Endothelial cell of umbilical vein (primary cell): ENCODE measurements at regions of chr15 and their contacts with region 1.

Region 1: DNA sequence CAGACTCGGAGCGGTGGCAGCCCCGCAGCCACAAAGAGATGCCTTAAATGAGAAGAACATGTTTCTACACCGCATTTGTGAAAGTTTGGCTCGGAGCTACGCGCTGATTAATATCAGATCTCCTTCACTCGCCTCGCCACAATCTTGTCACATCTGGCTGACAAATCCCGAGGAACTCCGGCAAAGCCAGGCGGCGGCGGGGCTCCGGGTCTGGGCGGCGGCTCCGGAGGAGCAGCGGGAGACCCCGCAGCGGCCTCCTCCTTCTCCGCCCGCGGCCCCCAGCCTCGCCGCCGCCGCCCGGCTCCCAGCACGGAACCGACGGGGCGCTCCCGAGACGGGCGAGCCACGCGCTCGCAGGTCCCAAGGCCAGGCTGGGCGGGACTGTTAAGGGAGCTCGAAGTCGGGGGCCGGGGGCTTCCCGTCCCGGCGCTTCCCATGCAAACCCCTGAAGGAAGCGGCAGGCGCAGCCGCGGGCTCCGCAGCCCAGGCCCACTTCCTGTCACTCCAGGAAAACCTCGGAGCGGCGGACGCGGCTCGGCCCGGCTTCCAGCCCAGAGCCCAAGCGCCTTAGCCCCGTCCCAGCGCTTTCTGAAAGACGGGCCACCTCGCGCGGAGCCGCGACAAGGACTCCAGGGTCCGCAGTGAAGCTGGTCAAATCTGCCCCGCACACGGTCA is 1.2 kb downstream of the BNC1 start:
- DNase-seq: peak; percentile 47
- H3K4me3 ChIP-seq: peak overlapping the region; percentile 57 to 81 (median 74)
- H3K27ac ChIP-seq: peak overlapping the region; percentile 25
- H3K4me1 ChIP-seq: peaks cover 31% of the 10 kb centered on the region
- H3K27me3 ChIP-seq: peaks cover 3 to 9% of the 10 kb centered on the region in 2 experiments
- CTCF ChIP-seq: no peak
- POLR2A ChIP-seq: no peak

Region 2: GRCh38 chr15:83199288-83199687 is 84.0 kb before region 1 on chr15:
- CTCF ChIA-PET with region 1: no interaction called
- POLR2A ChIA-PET with region 1: no interaction called
- dilution Hi-C with region 1: no loop called
- intact Hi-C with region 1: no loop called
- DNase-seq: no peak
- H3K4me3 ChIP-seq: no peak overlapping the region
- H3K27ac ChIP-seq: no peak overlapping the region
- H3K4me1 ChIP-seq: peaks cover 23% of the 10 kb centered on the region
- H3K27me3 ChIP-seq: no peaks in the 10 kb centered on the region
- CTCF ChIP-seq: no peak
- POLR2A ChIP-seq: no peak

Region 3: DNA sequence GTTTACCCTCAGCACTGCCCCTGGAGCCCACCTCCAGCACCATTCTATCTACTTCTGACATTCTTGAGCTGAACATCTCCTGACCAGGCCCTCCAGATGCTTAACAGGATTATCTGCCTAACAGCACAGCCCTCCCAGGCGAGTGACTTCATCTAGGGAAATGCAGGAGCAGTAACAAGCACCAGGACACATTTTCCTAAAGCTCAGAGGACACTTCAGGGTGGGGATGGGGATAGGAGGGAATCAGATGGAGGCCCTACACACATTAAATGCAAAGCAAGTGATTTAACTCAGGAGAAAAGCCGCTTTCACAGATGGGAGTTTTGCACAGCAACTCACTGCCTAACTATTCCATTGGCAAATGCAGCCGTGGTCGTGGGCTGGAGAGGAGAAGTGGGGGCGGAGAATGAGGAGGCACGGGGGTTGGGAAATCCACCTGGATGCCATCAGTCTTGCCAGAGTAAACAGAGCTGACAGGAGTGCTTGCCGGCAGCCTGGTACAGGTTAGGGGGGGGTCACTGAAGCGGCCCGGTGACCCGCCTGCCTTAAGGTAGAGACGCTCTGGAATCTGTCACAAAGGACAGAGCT is 22.5 kb after region 1 on chr15:
- CTCF ChIA-PET with region 1: interaction called, 6 read pairs
- POLR2A ChIA-PET with region 1: no interaction called
- dilution Hi-C with region 1: no loop called
- intact Hi-C with region 1: loop called (anchors 2 kb)
- DNase-seq: no peak
- H3K4me3 ChIP-seq: no peak overlapping the region
- H3K27ac ChIP-seq: no peak overlapping the region
- H3K4me1 ChIP-seq: peaks cover 8% of the 10 kb centered on the region
- H3K27me3 ChIP-seq: no peaks in the 10 kb centered on the region
- CTCF ChIP-seq: no peak
- POLR2A ChIP-seq: no peak

Region 4: DNA sequence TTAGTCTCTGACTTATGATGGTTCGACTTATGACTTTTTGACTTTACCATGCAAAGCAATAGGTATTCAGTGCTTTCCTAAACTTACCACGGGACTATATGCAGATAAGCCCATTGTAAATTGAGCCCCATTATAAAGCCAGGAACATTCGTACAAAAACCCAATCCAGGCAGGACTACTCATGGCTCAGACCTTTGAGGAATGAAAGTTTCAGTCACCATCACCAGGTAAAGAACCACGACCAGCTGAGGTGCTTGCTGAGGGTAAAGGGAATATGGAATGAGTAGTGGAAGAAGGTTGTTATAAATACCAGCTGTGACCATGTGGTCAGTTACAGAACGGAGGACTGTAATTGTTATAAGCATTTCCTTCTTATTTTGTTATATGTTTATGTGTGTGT is 56.1 kb after region 1 on chr15:
- CTCF ChIA-PET with region 1: no interaction called
- POLR2A ChIA-PET with region 1: no interaction called
- dilution Hi-C with region 1: no loop called
- intact Hi-C with region 1: no loop called
- DNase-seq: no peak
- H3K4me3 ChIP-seq: no peak overlapping the region
- H3K27ac ChIP-seq: no peak overlapping the region
- H3K4me1 ChIP-seq: no peaks in the 10 kb centered on the region
- H3K27me3 ChIP-seq: no peaks in the 10 kb centered on the region
- CTCF ChIP-seq: no peak
- POLR2A ChIP-seq: no peak

Region 5: GRCh38 chr15:83356501-83357399 is 73.5 kb after region 1 on chr15:
- CTCF ChIA-PET with region 1: no interaction called
- POLR2A ChIA-PET with region 1: no interaction called
- dilution Hi-C with region 1: no loop called
- intact Hi-C with region 1: no loop called
- DNase-seq: no peak
- H3K4me3 ChIP-seq: no peak overlapping the region
- H3K27ac ChIP-seq: no peak overlapping the region
- H3K4me1 ChIP-seq: no peaks in the 10 kb centered on the region
- H3K27me3 ChIP-seq: no peaks in the 10 kb centered on the region
- CTCF ChIP-seq: no peak
- POLR2A ChIP-seq: no peak